GM12878 (cell line): ENCODE measurements at regions of chr5 and their contacts with region 1.

Region 1: GRCh38 chr5:172114875-172115422 is 73.1 kb downstream of the STK10 start:
- DNase-seq: peak; percentile 93
- ATAC-seq: peak; percentile 75
- H3K4me3 ChIP-seq: peak overlapping the region; percentile 62; the same call in 1 of the 2 replicates
- H3K27ac ChIP-seq: peak overlapping the region; percentile 95
- H3K4me1 ChIP-seq: peaks cover 43% of the 10 kb centered on the region
- H3K27me3 ChIP-seq: no peaks in the 10 kb centered on the region
- CTCF ChIP-seq: no peak
- EP300 ChIP-seq: peak; percentile 62 to 75
- POLR2A ChIP-seq: peak; percentile 86
- RAD21 ChIP-seq: peak; percentile 23; the same call in 1 of the 2 replicates

Region 2: GRCh38 chr5:172283020-172283861 is 168.3 kb after region 1 on chr5 and contains the start of gene UBTD2:
- CTCF ChIA-PET with region 1: interaction called, 13 read pairs
- POLR2A ChIA-PET with region 1: no interaction called
- RAD21 ChIA-PET with region 1: interaction called, 12 read pairs
- SMC1A ChIA-PET with region 1: interaction called, 10 read pairs
- in situ Hi-C with region 1: no loop called
- intact Hi-C with region 1: loop called (anchors 2 kb)
- DNase-seq: no peak
- ATAC-seq: peak; percentile 83
- H3K4me3 ChIP-seq: peak within 1 kb of the TSS; percentile 99
- H3K27ac ChIP-seq: peak within 1 kb of the TSS; percentile 72
- H3K4me1 ChIP-seq: no peaks in the 10 kb centered on the region; the same call in 1 of the 2 replicates
- H3K27me3 ChIP-seq: no peaks in the 10 kb centered on the region
- CTCF ChIP-seq: peak; percentile 30 to 64 (median 57); a peak in 3 of 6 replicates
- EP300 ChIP-seq: no peak
- POLR2A ChIP-seq: no peak
- RAD21 ChIP-seq: peak; percentile 46
- polyA plus RNA-seq, gene UBTD2: 7.7 to 12.5 TPM